ENCODE measurements at regions of chr1 and their contacts with region 1.

Region 1: GRCh38 chr1:108691942-108692723 is at the start of gene PRPF38B:
- DNase-seq: peak; percentile 92 to 96 (median 93)
- H3K4me3 ChIP-seq: peak within 1 kb of the TSS; percentile 68 to 94
- H3K4me3 Mint-ChIP-seq: peak within 1 kb of the TSS; percentile 90 to 97 (median 94)
- H3K27ac ChIP-seq: peak within 1 kb of the TSS; percentile 98
- H3K27ac Mint-ChIP-seq: peak within 1 kb of the TSS; percentile 96 to 99 (median 98)
- H3K4me1 ChIP-seq: peaks cover 50% of the 10 kb centered on the region
- H3K4me1 Mint-ChIP-seq: peaks cover 20 to 66% (median 36%) of the 10 kb centered on the region in 4 donors
- H3K27me3 ChIP-seq: no peaks in the 10 kb centered on the region
- H3K27me3 Mint-ChIP-seq: no peaks in the 10 kb centered on the region
- total RNA-seq, gene PRPF38B: 124 to 126 TPM

Region 2: GRCh38 chr1:108512239-108512981 is 179.7 kb before region 1 on chr1:
- CTCF ChIA-PET with region 1: interaction called, 12 read pairs
- POLR2A ChIA-PET with region 1: interaction called, 7 read pairs
- intact Hi-C with region 1: loop called (anchors 1 kb)
- DNase-seq: peak; percentile 35 to 58 (median 53)
- H3K4me3 ChIP-seq: no peak overlapping the region
- H3K4me3 Mint-ChIP-seq: no peak overlapping the region
- H3K27ac ChIP-seq: no peak overlapping the region
- H3K27ac Mint-ChIP-seq: no peak overlapping the region
- H3K4me1 ChIP-seq: no peaks in the 10 kb centered on the region
- H3K4me1 Mint-ChIP-seq: no peaks in the 10 kb centered on the region
- H3K27me3 ChIP-seq: no peaks in the 10 kb centered on the region
- H3K27me3 Mint-ChIP-seq: peaks cover 3 to 5% of the 10 kb centered on the region in 2 donors

Region 3: DNA sequence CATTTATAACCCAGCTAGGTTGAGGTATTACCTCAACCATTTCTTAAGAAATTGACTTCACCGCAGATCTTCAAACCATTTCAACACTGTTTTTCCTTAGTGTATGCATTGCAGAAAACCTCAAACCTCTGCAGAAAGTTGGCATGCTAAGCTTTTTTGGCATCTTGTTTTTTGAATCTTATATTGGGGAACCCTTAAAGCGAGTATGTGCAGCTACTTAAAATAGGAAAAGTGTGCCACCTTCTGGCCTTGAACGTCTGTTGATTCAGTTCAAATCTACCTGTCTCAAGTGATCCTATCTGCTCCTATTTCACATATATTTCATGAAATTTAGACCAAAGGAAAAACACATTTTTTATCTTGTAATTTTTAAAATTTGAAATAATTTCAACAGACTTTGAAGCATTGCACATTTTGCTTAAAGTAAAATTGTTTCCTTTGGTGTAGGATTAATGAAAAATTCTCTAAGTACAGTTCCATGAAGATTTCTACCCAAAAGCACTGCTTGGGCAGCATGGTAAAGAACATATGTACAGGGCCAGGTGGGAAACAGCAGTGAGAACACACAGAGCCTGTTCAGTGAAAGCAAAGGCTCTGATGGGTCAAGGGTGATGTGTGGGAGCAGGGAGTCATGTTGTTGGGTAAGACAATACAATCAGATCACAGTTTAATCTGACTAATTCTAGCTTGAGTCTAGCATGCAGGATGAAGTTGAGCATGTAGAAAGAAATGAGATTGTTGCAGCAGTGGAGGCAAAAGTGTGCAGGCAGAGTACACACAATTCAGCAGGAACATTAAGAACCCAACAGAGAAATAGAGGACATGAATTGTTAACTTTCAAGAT is 48.4 kb before region 1 on chr1:
- CTCF ChIA-PET with region 1: interaction called, 138 read pairs
- POLR2A ChIA-PET with region 1: interaction called, 445 read pairs
- intact Hi-C with region 1: loop called (anchors 1 kb)
- DNase-seq: peak; percentile 57 to 73 (median 69)
- H3K4me3 ChIP-seq: no peak overlapping the region
- H3K4me3 Mint-ChIP-seq: peak overlapping the region in 7 of 8 donors; percentile 4 to 52 (median 17)
- H3K27ac ChIP-seq: peak overlapping the region; percentile 57
- H3K27ac Mint-ChIP-seq: peak overlapping the region; percentile 91 to 99 (median 98)
- H3K4me1 ChIP-seq: peaks cover 64% of the 10 kb centered on the region
- H3K4me1 Mint-ChIP-seq: peaks cover 59 to 76% (median 68%) of the 10 kb centered on the region in 4 donors
- H3K27me3 ChIP-seq: no peaks in the 10 kb centered on the region
- H3K27me3 Mint-ChIP-seq: no peaks in the 10 kb centered on the region

Region 4: DNA sequence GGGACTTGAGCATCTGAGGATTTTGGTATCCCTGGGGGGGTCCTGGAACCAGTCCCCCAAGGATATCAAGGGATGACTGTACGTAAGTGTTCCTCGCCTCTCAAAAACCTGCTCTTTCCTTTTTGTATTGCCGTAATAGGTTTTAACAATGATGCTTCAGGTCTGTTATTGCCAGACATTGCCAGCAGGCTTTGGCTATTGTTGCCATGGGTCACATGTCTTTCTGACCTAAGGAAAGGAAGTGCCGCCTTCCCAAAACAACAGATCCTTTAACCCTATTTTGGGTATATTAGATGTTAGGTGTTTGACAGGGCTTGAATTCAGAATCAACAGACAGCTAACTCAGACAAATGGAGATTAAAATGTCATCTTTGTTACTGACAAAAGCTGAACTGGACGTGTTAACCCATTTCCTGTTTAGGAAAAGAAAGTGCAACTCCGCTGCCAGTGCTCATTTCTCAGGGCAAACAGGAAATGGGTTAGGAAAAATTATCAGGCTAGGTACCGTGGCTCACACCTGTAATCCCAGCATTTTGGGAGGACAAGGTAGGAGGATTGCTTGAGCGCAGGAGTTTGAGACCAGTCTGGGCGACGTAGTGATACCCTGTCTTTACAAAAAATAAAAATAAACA is 12.4 kb before region 1 on chr1:
- CTCF ChIA-PET with region 1: interaction called, 6 read pairs
- POLR2A ChIA-PET with region 1: interaction called, 12 read pairs
- intact Hi-C with region 1: no loop called
- DNase-seq: no peak
- H3K4me3 ChIP-seq: no peak overlapping the region
- H3K4me3 Mint-ChIP-seq: peak overlapping the region in 7 of 8 donors; percentile 23 to 73 (median 54)
- H3K27ac ChIP-seq: no peak overlapping the region
- H3K27ac Mint-ChIP-seq: peak overlapping the region in 4 of 7 donors; percentile 19 to 80 (median 42)
- H3K4me1 ChIP-seq: peaks cover 9% of the 10 kb centered on the region
- H3K4me1 Mint-ChIP-seq: peaks cover 3 to 8% (median 6%) of the 10 kb centered on the region in 4 donors
- H3K27me3 ChIP-seq: no peaks in the 10 kb centered on the region
- H3K27me3 Mint-ChIP-seq: peaks cover 0 to 2% of the 10 kb centered on the region in 2 donors

Region 5: GRCh38 chr1:108753363-108753762 is 61.2 kb after region 1 on chr1:
- CTCF ChIA-PET with region 1: interaction called, 5 read pairs
- POLR2A ChIA-PET with region 1: interaction called, 30 read pairs
- intact Hi-C with region 1: no loop called
- DNase-seq: no peak
- H3K4me3 ChIP-seq: no peak overlapping the region
- H3K4me3 Mint-ChIP-seq: no peak overlapping the region
- H3K27ac ChIP-seq: no peak overlapping the region
- H3K27ac Mint-ChIP-seq: no peak overlapping the region
- H3K4me1 ChIP-seq: peaks cover 26% of the 10 kb centered on the region
- H3K4me1 Mint-ChIP-seq: peaks cover 22 to 39% (median 28%) of the 10 kb centered on the region in 4 donors
- H3K27me3 ChIP-seq: no peaks in the 10 kb centered on the region
- H3K27me3 Mint-ChIP-seq: no peaks in the 10 kb centered on the region

Region 6: GRCh38 chr1:108955881-108956280 is 263.7 kb after region 1 on chr1:
- CTCF ChIA-PET with region 1: no interaction called
- POLR2A ChIA-PET with region 1: interaction called, 4 read pairs
- intact Hi-C with region 1: loop called (anchors 2 kb)
- DNase-seq: no peak
- H3K4me3 ChIP-seq: no peak overlapping the region
- H3K4me3 Mint-ChIP-seq: peak overlapping the region in 3 of 8 donors; percentile 39 to 65 (median 62)
- H3K27ac ChIP-seq: no peak overlapping the region
- H3K27ac Mint-ChIP-seq: peak overlapping the region in 6 of 7 donors; percentile 70 to 98 (median 88)
- H3K4me1 ChIP-seq: peaks cover 32% of the 10 kb centered on the region
- H3K4me1 Mint-ChIP-seq: peaks cover 32 to 53% (median 42%) of the 10 kb centered on the region in 4 donors
- H3K27me3 ChIP-seq: no peaks in the 10 kb centered on the region
- H3K27me3 Mint-ChIP-seq: no peaks in the 10 kb centered on the region

Region 7: DNA sequence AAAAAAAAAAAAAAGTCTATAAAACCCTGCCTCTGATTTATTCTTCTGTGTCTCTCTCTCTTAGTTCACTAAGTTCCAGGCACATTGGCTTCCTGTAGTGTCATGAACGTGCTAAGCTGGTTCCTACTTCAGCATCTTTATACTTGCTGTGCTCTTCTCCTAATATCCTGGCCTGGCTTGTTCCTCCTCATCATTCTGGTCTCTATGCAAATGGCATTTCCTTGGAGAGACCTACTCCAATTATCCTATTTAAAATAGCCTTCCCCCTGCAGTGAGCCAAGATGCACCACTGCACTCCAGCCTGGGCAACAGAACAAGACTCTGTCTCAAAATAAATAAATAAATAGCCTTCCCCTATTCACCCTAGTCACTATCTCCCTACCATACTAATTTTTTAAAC is 280.8 kb after region 1 on chr1:
- CTCF ChIA-PET with region 1: no interaction called
- POLR2A ChIA-PET with region 1: no interaction called
- intact Hi-C with region 1: no loop called
- DNase-seq: no peak
- H3K4me3 ChIP-seq: no peak overlapping the region
- H3K4me3 Mint-ChIP-seq: no peak overlapping the region
- H3K27ac ChIP-seq: no peak overlapping the region
- H3K27ac Mint-ChIP-seq: peak overlapping the region in 1 of 7 donors; percentile 57
- H3K4me1 ChIP-seq: no peaks in the 10 kb centered on the region
- H3K4me1 Mint-ChIP-seq: no peaks in the 10 kb centered on the region
- H3K27me3 ChIP-seq: no peaks in the 10 kb centered on the region
- H3K27me3 Mint-ChIP-seq: no peaks in the 10 kb centered on the region

Region 8: GRCh38 chr1:109112652-109113285 is 420.6 kb after region 1 on chr1:
- CTCF ChIA-PET with region 1: no interaction called
- POLR2A ChIA-PET with region 1: interaction called, 10 read pairs
- intact Hi-C with region 1: loop called (anchors 1 kb)
- DNase-seq: peak; percentile 86 to 89 (median 87)
- H3K4me3 ChIP-seq: peak overlapping the region in 1 of 2 donors; percentile 64
- H3K4me3 Mint-ChIP-seq: peak overlapping the region; percentile 86 to 94 (median 90)
- H3K27ac ChIP-seq: peak overlapping the region; percentile 61
- H3K27ac Mint-ChIP-seq: peak overlapping the region; percentile 94 to 99 (median 98)
- H3K4me1 ChIP-seq: peaks cover 24% of the 10 kb centered on the region
- H3K4me1 Mint-ChIP-seq: peaks cover 23 to 35% (median 28%) of the 10 kb centered on the region in 4 donors
- H3K27me3 ChIP-seq: no peaks in the 10 kb centered on the region
- H3K27me3 Mint-ChIP-seq: peaks cover 0 to 2% of the 10 kb centered on the region in 2 donors